Mammary epithelial cell (primary cell): ENCODE measurements at regions of chr11 and their contacts with region 1.

Region 1: DNA sequence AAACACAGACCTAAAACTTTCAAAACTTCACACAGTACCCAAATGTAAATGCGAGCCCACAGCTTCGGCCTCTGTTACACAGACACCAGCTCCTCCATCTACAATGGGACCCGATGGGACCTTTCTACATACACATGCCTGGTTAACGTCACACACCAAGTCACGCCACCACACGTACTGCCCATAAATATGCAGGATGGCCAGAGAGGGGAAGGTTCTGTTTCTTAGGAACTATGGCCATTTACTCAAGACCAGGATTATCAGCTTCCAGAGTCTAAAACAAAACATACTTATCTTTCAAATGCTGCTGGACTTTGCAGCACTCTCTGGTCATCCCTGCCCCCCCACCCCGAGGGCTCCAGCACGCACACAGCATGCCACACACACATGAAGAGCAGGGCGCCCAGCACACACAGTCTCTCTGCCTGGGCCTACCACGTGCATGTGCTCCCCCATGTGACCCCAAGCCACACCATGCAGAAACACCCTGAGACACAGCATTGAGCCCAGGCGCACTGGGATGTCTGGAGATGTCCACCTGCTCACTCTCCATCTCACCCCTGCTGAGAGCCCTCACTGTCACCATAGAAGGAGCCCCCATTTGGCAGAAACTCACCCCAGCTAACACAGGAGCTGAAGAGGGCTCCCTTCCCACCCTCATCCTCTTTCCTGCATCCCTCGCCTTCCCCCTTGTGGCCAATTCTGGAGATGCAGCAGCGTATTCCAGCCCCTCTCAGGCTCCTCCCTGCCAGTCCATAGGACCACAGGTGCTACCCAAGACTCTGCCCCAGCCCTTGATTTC is 61.8 kb downstream of the SLC22A12 start:
- DNase-seq: peak; percentile 41
- H3K4me3 ChIP-seq: no peak overlapping the region
- H3K27ac ChIP-seq: no peak overlapping the region
- H3K4me1 ChIP-seq: no peaks in the 10 kb centered on the region
- H3K27me3 ChIP-seq: no peaks in the 10 kb centered on the region
- CTCF ChIP-seq: peak; percentile 91 to 93

Region 2: GRCh38 chr11:64204464-64204989 is 448.3 kb before region 1 on chr11:
- CTCF ChIA-PET with region 1: no interaction called
- dilution Hi-C with region 1: no loop called
- in situ Hi-C with region 1: no loop called
- intact Hi-C with region 1: loop called (anchors 5 kb)
- DNase-seq: peak; percentile 81
- H3K4me3 ChIP-seq: no peak overlapping the region
- H3K27ac ChIP-seq: no peak overlapping the region
- H3K4me1 ChIP-seq: peaks cover 5% of the 10 kb centered on the region
- H3K27me3 ChIP-seq: no peaks in the 10 kb centered on the region
- CTCF ChIP-seq: peak; percentile 80 to 91

Region 3: DNA sequence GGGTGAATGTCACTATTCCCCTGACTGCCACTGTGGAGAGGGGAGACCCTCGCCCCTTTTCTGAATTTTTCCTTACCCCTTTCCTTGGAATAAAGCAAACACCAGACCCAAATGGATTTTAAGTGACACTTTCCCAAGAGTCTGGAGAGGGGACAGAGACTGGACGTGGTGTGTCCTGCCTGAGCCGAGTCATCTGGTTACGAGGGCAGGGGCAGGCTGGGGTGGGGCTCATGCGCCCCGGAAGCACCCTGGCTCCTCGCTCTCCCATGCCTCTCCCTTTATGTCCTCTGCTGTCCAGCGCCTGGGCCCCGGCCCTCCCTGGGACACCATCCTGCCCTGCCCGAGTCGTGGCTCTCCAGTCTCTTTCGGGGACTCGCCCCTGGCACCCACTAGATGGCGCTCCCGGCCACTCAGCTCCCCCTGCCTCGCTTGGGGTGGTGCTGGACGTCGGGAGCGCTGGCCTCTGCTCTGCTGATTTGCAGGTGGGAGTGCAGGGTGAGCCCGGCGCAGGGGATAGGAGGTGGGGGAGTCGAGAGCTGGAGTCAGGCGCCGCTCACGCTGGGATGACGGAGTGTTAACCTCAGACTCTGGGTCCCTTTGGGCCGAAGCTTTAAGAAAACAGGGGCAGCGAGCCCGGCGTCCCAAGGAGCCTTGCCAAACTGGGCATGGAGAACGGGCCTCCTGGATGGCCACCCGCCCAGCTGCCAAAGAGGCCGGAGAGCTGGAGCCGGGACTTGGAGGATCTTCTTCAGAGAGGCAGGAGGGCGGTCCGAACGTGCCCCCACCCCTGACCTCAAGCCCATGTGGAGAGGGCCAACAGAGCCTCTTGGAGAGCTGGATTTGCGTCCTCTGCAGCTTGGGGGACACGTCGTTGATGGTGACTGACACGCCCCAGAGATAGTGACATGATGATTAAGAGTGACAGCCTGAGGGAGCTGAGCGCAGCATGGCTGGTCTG is 203.9 kb before region 1 on chr11:
- CTCF ChIA-PET with region 1: no interaction called
- dilution Hi-C with region 1: loop called (anchors 25 kb)
- in situ Hi-C with region 1: no loop called
- intact Hi-C with region 1: loop called (anchors 1 kb)
- DNase-seq: peak; percentile 62
- H3K4me3 ChIP-seq: peak overlapping the region in 1 of 3 experiments; percentile 36
- H3K27ac ChIP-seq: no peak overlapping the region
- H3K4me1 ChIP-seq: peaks cover 13% of the 10 kb centered on the region
- H3K27me3 ChIP-seq: no peaks in the 10 kb centered on the region
- CTCF ChIP-seq: peak; percentile 60 to 91

Region 4: GRCh38 chr11:64553551-64554201 is 99.1 kb before region 1 on chr11:
- CTCF ChIA-PET with region 1: no interaction called
- dilution Hi-C with region 1: no loop called
- in situ Hi-C with region 1: no loop called
- intact Hi-C with region 1: loop called (anchors 1 kb)
- DNase-seq: no peak
- H3K4me3 ChIP-seq: no peak overlapping the region
- H3K27ac ChIP-seq: no peak overlapping the region
- H3K4me1 ChIP-seq: no peaks in the 10 kb centered on the region
- H3K27me3 ChIP-seq: no peaks in the 10 kb centered on the region
- CTCF ChIP-seq: peak; percentile 91 to 97

Region 5: DNA sequence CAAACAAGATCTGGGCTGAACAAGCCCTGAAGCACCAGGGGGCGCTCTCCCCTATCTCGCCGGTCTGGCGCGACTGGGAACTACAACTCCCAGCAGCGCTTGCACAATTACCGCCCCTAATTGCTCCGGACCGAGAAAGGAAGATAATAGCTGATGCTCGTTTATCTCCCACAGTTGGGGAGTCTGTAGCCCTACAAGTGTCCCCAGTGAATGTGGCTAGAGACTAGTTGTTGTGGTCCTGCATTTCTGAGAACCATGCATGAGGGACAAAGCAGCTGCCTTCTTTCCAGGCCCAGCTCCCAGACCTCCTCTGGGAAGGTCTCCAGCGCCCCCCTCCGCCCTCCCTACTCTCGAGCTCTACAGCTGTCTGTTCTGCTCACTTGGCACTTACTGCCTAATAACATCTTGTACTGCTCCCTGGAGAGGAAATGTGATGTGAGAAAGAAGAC is 35.8 kb after region 1 on chr11:
- CTCF ChIA-PET with region 1: interaction called, 5 read pairs
- dilution Hi-C with region 1: no loop called
- in situ Hi-C with region 1: no loop called
- intact Hi-C with region 1: loop called (anchors 1 kb)
- DNase-seq: peak; percentile 61
- H3K4me3 ChIP-seq: peak overlapping the region in 2 of 3 experiments; percentile 21 to 27
- H3K27ac ChIP-seq: no peak overlapping the region
- H3K4me1 ChIP-seq: peaks cover 19% of the 10 kb centered on the region
- H3K27me3 ChIP-seq: no peaks in the 10 kb centered on the region
- CTCF ChIP-seq: peak; percentile 72 to 82

Region 6: GRCh38 chr11:64742889-64743590 is 90.3 kb after region 1 on chr11:
- CTCF ChIA-PET with region 1: interaction called, 3 read pairs
- dilution Hi-C with region 1: no loop called
- in situ Hi-C with region 1: no loop called
- intact Hi-C with region 1: loop called (anchors 5 kb)
- DNase-seq: peak; percentile 28
- H3K4me3 ChIP-seq: peak overlapping the region; percentile 26 to 47 (median 34)
- H3K27ac ChIP-seq: no peak overlapping the region
- H3K4me1 ChIP-seq: peaks cover 24% of the 10 kb centered on the region
- H3K27me3 ChIP-seq: peaks cover 18% of the 10 kb centered on the region
- CTCF ChIP-seq: peak; percentile 45 to 81